ENCODE measurements at regions of chr7 and their contacts with region 1.

Region 1: DNA sequence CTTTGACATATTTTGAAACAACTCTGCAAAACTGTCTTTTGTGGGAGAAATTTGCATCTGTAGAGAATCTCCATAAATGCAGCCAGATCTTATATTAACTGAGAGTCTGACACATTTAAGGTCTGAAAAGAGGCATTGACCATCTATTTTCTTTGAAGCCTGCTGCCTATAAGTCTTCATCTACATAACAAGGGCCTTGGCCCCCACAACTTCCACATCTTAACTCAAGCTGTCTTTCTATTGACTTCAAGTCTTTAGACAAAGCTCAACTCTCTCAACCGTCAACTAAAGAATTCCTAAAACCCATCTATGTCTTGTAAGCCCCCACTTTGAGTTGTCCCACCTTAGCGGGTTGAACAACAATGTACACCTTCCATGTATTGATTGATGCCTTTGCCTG is 72.4 kb upstream of the ADCY1 start:
- DNase-seq: no peak
- H3K4me3 ChIP-seq: no peak overlapping the region
- H3K27ac ChIP-seq: no peak overlapping the region
- H3K4me1 ChIP-seq: no peaks in the 10 kb centered on the region
- H3K27me3 ChIP-seq: peaks cover 9% of the 10 kb centered on the region
- CTCF ChIP-seq: no peak

Region 2: GRCh38 chr7:45482451-45482850 is 19.3 kb before region 1 on chr7:
- intact Hi-C with region 1: loop called (anchors 2 kb)
- DNase-seq: no peak
- H3K4me3 ChIP-seq: no peak overlapping the region
- H3K27ac ChIP-seq: no peak overlapping the region
- H3K4me1 ChIP-seq: no peaks in the 10 kb centered on the region
- H3K27me3 ChIP-seq: peaks cover 9% of the 10 kb centered on the region
- CTCF ChIP-seq: no peak

Region 3: DNA sequence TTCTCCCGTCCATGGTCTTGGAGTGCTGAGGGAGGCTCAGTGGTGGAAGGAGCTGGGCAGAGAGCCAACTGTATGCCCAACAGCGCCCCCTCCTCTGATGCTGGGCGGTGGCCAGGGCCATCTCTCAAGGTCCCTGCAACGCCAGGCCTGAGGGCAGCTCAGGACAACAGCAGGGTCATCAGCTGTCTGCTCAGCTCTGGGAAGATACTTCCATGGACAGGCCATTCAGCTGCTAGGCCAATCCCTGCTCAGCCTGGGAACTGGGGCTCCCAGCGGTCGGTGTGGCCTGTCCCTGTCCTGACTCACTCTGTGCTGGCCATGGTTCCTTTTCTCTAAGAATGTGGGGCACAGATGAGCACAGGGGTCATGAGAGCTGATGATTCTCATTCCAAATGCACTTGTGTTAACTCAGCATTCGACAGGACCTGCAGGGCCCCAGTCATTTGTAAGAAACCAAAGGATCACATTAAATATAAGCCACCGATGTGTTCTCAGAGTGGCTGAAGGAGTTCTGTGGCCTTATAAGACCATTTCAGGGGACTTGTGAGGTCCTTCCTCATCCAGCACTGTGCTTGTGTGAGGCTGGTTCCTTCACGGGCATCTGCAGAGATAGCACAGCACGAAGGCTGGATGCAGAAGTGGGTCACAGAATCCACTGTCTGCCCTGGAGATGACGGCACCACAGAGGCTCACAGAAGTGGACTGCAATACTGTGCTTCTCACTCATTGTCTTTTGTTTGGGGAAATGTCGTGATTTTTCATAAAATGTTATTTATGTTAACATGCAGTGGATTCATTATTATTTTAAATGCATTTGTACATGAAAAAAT is 145.4 kb after region 1 on chr7:
- intact Hi-C with region 1: no loop called
- DNase-seq: no peak
- H3K4me3 ChIP-seq: no peak overlapping the region
- H3K27ac ChIP-seq: peak overlapping the region; percentile 5
- H3K4me1 ChIP-seq: peaks cover 26% of the 10 kb centered on the region
- H3K27me3 ChIP-seq: no peaks in the 10 kb centered on the region
- CTCF ChIP-seq: no peak

Measured in left ventricle myocardium inferior (tissue), 1 donor.